Gastrocnemius medialis (tissue), 4 donors: ENCODE measurements at regions of chr1 and their contacts with region 1.

Region 1: GRCh38 chr1:52056163-52056936 is at the start of gene BTF3L4:
- DNase-seq: peak; percentile 96 to 97
- ATAC-seq: peak; percentile 89 to 90
- H3K4me3 ChIP-seq: peak within 1 kb of the TSS; percentile 75 to 87 (median 86)
- H3K27ac ChIP-seq: peak within 1 kb of the TSS; percentile 92 to 98 (median 96)
- H3K4me1 ChIP-seq: peaks cover 38 to 39% of the 10 kb centered on the region in 2 donors
- H3K27me3 ChIP-seq: no peaks in the 10 kb centered on the region
- CTCF ChIP-seq: no peak
- POLR2A ChIP-seq: peak; percentile 85 to 86
- total RNA-seq, gene BTF3L4: 68.4 to 92.9 (median 72.4) TPM

Region 2: GRCh38 chr1:51736702-51737101 is 319.6 kb before region 1 on chr1:
- in situ Hi-C with region 1: no loop called
- intact Hi-C with region 1: no loop called
- DNase-seq: peak in 1 of 2 donors; percentile 32
- ATAC-seq: peak; percentile 81 to 82
- H3K4me3 ChIP-seq: peak overlapping the region; percentile 4 to 28 (median 21)
- H3K27ac ChIP-seq: peak overlapping the region; percentile 70 to 84 (median 76)
- H3K4me1 ChIP-seq: peaks cover 69 to 85% of the 10 kb centered on the region in 2 donors
- H3K27me3 ChIP-seq: no peaks in the 10 kb centered on the region
- CTCF ChIP-seq: no peak
- POLR2A ChIP-seq: no peak

Region 3: DNA sequence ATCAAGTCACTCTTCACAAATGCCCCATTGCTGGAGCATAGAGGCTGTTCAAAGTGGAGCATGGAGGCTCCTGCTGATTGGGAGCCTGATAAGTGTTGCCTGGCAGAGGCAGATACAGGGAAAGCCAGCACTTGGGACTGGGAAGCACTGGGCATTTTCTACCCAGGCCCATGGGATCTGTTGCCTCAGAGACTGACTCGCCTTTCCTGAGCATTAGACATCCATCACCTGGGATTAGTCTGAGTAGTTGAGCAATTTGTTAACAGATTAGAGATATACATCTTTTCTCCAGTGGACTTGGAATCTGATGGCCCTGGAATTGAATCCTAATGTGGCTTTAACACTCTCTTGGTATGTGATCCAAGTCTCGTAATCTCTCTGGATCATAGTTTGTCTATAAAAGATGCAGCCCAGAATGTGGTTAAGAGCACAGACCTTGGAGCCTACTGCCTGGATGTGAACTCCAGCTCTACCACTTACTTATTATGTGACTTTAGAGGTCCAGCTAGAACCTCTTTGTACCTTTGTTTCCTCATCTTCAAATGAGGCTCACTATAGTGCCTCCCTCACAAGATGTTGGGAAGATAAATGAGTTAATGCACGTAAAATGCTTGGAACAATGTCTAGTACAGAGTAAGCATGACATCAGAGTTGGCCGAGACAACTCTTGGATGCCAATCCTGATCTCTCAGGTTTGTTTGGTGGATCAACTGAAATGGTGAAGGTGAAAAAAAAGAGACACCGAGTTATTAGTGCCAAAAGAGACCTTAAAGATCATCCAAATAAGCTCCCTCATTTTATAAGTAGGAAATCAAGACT is 139.6 kb before region 1 on chr1:
- in situ Hi-C with region 1: no loop called
- intact Hi-C with region 1: no loop called
- DNase-seq: no peak
- ATAC-seq: no peak
- H3K4me3 ChIP-seq: no peak overlapping the region
- H3K27ac ChIP-seq: no peak overlapping the region
- H3K4me1 ChIP-seq: no peaks in the 10 kb centered on the region
- H3K27me3 ChIP-seq: peaks cover 0 to 29% (median 16%) of the 10 kb centered on the region in 3 donors
- CTCF ChIP-seq: no peak
- POLR2A ChIP-seq: no peak

Region 4: GRCh38 chr1:52033190-52034049 is 22.9 kb before region 1 on chr1 and contains the start of gene KTI12:
- in situ Hi-C with region 1: no loop called
- intact Hi-C with region 1: loop called (anchors 1 kb)
- DNase-seq: peak; percentile 67 to 74
- ATAC-seq: peak; percentile 84 to 90
- H3K4me3 ChIP-seq: peak within 1 kb of the TSS; percentile 80 to 95 (median 86)
- H3K27ac ChIP-seq: peak within 1 kb of the TSS; percentile 79 to 88 (median 88)
- H3K4me1 ChIP-seq: peaks cover 15 to 16% of the 10 kb centered on the region in 2 donors
- H3K27me3 ChIP-seq: no peaks in the 10 kb centered on the region
- CTCF ChIP-seq: no peak
- POLR2A ChIP-seq: peak in 1 of 2 donors; percentile 59
- total RNA-seq, gene KTI12: 3.4 to 5.9 (median 5.1) TPM